PC-3 (cell line): ENCODE measurements at regions of chr14 and their contacts with region 1.

Region 1: DNA sequence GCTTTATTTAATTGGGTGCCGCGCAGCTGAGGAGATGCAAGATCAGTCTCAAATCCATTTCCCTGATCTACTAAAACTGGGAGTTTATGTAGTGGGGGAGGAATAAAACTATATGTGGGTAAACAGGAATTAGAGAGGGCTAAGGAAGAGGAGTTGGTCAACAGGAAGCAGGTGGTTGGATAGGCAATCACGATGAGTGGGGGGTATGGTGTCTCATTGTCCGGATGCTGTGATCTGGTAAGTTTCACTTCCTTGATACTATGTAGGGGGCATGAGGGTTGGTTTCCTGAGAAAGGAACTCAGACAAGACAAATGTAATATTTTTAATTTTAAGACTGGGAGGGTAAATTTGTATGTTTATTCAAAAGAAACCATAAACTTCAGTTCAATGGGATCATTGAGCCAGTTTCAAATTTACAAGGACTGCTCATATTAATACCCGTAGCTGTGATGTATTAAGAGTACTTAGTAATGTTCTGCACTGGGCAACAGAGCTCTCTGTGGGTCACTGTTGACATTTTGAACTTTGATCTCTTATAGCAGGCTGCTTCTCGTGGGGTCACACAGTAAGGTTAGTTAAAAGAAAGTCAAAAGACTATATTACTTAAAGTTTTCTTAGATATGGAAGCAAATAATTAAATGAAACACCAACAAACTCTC is 786.2 kb upstream of the FBXO33 start:
- DNase-seq: peak; percentile 70
- ATAC-seq: peak; percentile 86
- H3K4me3 ChIP-seq: no peak overlapping the region
- H3K27ac ChIP-seq: peak overlapping the region; percentile 79
- H3K4me1 ChIP-seq: peaks cover 63% of the 10 kb centered on the region
- H3K27me3 ChIP-seq: no peaks in the 10 kb centered on the region
- CTCF ChIP-seq: no peak

Region 2: DNA sequence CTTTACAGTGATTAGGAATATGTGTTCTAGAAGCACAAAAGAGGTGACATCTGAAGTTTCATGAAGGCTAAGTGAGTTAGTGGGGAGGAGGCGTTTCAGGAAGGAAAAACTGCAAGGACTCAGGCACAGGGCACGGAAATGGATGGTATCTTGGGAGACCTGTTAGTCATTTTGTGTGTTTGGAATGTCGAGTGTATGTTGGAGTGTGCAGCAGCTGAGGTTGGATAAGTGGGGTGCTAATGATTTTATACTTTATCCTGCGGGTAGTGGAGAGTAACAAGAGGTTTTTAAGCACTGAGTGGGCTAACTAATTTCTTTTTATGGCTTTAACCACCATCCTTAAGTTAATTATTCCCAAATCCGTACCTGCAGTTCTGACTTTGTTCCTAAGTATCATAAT is 214.6 kb before region 1 on chr14:
- CTCF ChIA-PET with region 1: no interaction called
- POLR2A ChIA-PET with region 1: no interaction called
- intact Hi-C with region 1: loop called (anchors 2 kb)
- DNase-seq: no peak
- ATAC-seq: peak; percentile 25; the same call in 1 of the 2 replicates
- H3K4me3 ChIP-seq: no peak overlapping the region
- H3K27ac ChIP-seq: no peak overlapping the region
- H3K4me1 ChIP-seq: no peaks in the 10 kb centered on the region
- H3K27me3 ChIP-seq: no peaks in the 10 kb centered on the region
- CTCF ChIP-seq: no peak

Region 3: GRCh38 chr14:40113671-40114070 is 104.7 kb before region 1 on chr14:
- CTCF ChIA-PET with region 1: no interaction called
- POLR2A ChIA-PET with region 1: no interaction called
- intact Hi-C with region 1: loop called (anchors 2 kb)
- DNase-seq: no peak
- ATAC-seq: no peak
- H3K4me3 ChIP-seq: no peak overlapping the region
- H3K27ac ChIP-seq: no peak overlapping the region
- H3K4me1 ChIP-seq: peaks cover 19% of the 10 kb centered on the region; the same call in 1 of the 2 replicates
- H3K27me3 ChIP-seq: no peaks in the 10 kb centered on the region
- CTCF ChIP-seq: no peak

Region 4: DNA sequence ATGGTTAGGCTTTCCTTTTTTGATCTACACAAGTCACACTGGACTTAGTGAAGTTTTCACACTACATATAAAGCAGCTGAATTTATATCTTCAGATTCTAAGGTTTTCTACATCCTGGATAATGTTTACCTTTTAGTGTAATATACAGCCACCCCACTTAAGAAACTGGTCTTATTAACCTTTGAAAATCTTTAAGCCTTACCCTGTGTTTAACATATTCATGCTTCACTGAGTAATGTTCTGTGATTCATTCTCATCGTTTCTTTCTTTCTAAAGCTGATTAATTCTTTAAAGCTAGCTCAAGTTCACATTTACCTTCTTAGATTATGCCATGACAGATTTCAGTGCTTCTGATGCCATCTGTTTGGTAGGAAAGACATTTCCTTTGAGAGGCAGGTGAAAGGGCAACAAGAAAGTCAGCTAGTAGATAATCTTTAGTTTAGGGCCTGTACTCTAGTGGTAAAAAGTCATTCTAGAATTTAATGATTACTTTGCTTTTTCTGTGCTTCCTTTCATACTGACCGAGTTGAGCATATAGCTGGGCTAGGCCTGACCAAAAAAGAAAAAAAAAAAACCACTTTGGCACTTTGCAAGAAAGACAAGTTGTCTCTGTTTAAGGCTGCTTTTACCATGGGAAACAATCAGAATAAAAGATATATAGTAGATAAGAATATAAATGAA is 95.3 kb before region 1 on chr14:
- CTCF ChIA-PET with region 1: no interaction called
- POLR2A ChIA-PET with region 1: no interaction called
- intact Hi-C with region 1: loop called (anchors 2 kb)
- DNase-seq: peak; percentile 83
- ATAC-seq: peak; percentile 91
- H3K4me3 ChIP-seq: peak overlapping the region; percentile 37; the same call in 1 of the 2 replicates
- H3K27ac ChIP-seq: peak overlapping the region; percentile 71
- H3K4me1 ChIP-seq: peaks cover 29% of the 10 kb centered on the region
- H3K27me3 ChIP-seq: no peaks in the 10 kb centered on the region
- CTCF ChIP-seq: no peak

Region 5: GRCh38 chr14:40312296-40312695 is 93.9 kb after region 1 on chr14:
- CTCF ChIA-PET with region 1: no interaction called
- POLR2A ChIA-PET with region 1: no interaction called
- intact Hi-C with region 1: loop called (anchors 2 kb)
- DNase-seq: peak; percentile 66
- ATAC-seq: peak; percentile 95
- H3K4me3 ChIP-seq: no peak overlapping the region
- H3K27ac ChIP-seq: peak overlapping the region; percentile 10; the same call in 1 of the 2 replicates
- H3K4me1 ChIP-seq: peaks cover 9% of the 10 kb centered on the region
- H3K27me3 ChIP-seq: no peaks in the 10 kb centered on the region
- CTCF ChIP-seq: no peak

Region 6: DNA sequence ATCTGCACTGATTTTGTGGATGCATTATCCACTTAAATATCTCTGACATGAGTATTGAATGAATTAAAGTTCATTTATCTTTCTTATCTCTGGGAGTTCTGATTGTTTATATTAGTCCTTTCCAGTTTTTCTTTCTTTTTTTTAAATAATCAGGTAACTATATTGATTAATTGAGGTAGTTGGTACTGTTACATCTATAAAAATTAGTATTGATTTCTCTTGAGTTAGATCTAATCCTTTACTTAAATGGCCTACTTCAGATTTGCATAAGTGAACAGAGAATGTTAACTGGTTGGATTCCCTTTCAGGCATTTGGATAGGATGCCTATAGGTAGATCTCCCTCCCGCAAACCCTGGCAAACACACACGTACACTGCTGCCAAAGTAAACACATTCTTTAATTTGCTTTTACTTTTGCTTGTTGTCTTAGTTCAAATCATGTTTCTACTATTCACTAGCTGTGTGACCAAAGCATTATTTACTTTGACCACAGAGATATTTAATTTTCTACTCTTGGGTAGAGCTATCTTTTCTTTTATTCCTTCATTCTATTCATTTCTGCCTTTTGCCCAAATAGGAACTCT is 149.8 kb after region 1 on chr14:
- CTCF ChIA-PET with region 1: no interaction called
- POLR2A ChIA-PET with region 1: no interaction called
- intact Hi-C with region 1: loop called (anchors 5 kb)
- DNase-seq: peak; percentile 87
- ATAC-seq: peak; percentile 92
- H3K4me3 ChIP-seq: no peak overlapping the region
- H3K27ac ChIP-seq: peak overlapping the region; percentile 66
- H3K4me1 ChIP-seq: peaks cover 23% of the 10 kb centered on the region
- H3K27me3 ChIP-seq: no peaks in the 10 kb centered on the region
- CTCF ChIP-seq: no peak